ENCODE measurements at regions of chr7 and their contacts with region 1.

Region 1: DNA sequence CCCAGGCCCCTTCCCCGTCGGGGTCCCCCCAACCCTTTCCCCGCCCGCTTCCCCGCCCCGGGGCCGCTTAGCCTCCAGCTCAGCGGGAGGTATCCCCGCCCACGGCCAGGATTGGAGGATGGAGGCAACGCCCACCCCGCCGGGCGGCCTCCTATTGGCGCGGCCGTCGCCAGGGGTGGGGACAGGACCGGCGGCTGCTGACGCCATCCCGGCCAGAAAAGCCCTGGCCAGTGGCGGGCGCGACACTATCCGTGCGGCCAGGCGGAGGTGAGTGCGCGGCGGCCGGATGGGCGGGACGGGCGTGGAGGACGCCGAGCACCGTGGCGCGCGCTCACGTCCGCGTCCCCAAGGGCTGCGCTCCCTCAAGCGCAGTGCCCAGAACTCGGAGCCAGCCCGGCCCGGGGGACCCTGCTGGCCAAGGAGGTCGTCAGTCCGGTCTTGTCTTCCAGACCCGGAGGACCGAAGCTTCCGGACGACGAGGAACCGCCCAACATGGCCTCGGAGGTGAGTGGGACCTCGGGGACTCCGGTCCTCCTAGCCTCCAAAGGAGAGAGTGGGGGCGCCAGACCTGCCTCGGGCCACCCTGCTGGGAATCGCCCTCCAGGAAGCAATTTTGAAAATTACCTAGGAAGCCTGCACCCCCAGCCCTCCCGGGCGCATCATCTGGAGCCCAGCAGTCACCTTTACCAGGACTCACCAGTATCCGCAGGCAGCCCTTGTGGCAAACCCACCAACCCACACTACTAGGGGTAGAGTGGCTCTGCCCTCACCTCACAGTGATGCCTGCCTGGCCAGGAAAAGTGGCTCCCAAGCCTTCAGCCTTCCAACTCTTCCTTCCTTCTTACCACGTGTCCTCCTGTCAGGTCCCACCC is at the start of gene ASL:
- DNase-seq: peak; percentile 94 to 98
- H3K4me3 ChIP-seq: peak within 1 kb of the TSS; percentile 82
- H3K4me3 Mint-ChIP-seq: peak within 1 kb of the TSS; percentile 93
- H3K27ac Mint-ChIP-seq: peak within 1 kb of the TSS; percentile 34
- H3K4me1 ChIP-seq: peaks cover 9% of the 10 kb centered on the region
- H3K4me1 Mint-ChIP-seq: no peaks in the 10 kb centered on the region
- H3K27me3 ChIP-seq: no peaks in the 10 kb centered on the region
- H3K27me3 Mint-ChIP-seq: no peaks in the 10 kb centered on the region
- CTCF ChIP-seq: no peak
- total RNA-seq, gene ASL: 54.9 and 64.0 TPM in 2 replicates

Region 2: DNA sequence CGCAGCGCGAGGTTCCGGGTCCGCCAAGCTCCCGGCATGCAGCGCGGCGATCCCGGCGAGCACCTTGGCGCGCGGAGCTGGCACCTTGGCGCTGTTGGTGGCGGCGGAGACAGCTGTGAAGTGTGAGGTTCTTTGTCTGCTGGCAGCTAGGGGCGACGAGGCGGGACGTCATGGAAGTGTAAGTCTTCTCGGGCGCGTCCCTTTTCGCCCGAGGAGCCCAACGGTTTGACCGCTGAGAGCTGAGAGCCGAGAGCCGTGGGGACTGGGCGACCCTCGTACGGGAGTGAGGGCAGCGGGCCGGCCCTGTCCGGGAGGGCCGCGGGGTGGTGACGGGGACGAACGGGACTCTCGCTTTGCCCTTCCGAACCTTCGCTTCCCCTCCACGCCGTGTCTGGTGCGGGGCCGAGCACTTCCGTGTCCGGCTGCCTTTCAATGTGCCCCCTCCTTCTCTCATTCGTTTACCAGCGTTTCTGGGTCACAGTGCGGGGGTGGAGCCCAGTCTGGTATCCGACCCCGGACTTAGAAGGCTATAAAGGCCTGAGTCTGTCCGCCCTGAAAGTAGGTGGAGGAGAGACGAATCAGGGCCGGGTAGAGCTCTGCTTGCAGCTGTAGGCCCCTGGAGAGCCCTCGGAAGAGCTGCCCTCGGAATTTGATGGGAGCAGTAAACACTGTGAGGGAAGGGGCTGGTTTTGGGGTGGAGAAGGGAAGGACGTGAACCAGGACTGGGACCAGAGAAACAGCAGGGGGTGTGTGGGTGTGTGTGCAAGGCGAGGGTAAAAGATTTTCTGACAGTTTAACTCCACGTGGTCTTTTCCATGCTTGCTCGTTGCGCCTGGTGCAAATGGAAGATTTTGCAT is 39.2 kb after region 1 on chr7 and contains the start of gene CRCP:
- CTCF ChIA-PET with region 1: interaction called, 11 read pairs
- POLR2A ChIA-PET with region 1: interaction called, 10 read pairs
- intact Hi-C with region 1: loop called (anchors 2 kb)
- DNase-seq: peak; percentile 89 to 92
- H3K4me3 ChIP-seq: peak within 1 kb of the TSS; percentile 86
- H3K4me3 Mint-ChIP-seq: peak within 1 kb of the TSS; percentile 90
- H3K27ac Mint-ChIP-seq: peak within 1 kb of the TSS; percentile 99
- H3K4me1 ChIP-seq: peaks cover 10% of the 10 kb centered on the region
- H3K4me1 Mint-ChIP-seq: peaks cover 11% of the 10 kb centered on the region
- H3K27me3 ChIP-seq: no peaks in the 10 kb centered on the region
- H3K27me3 Mint-ChIP-seq: no peaks in the 10 kb centered on the region
- CTCF ChIP-seq: peak in 1 of 2 experiments; percentile 70
- total RNA-seq, gene CRCP: 48.2 and 48.7 TPM in 2 replicates